ENCODE measurements at regions of chr2 and their contacts with region 1.

Region 1: GRCh38 chr2:28594289-28595108 is 98.6 kb downstream of the PLB1 start:
- DNase-seq: peak; percentile 93 to 96
- H3K4me3 ChIP-seq: no peak overlapping the region
- H3K27ac ChIP-seq: peak overlapping the region; percentile 42 to 70 (median 65)
- H3K4me1 ChIP-seq: peaks cover 14 to 28% of the 10 kb centered on the region in 2 donors
- H3K27me3 ChIP-seq: no peaks in the 10 kb centered on the region
- CTCF ChIP-seq: peak; percentile 66 to 90 (median 80)
- POLR2A ChIP-seq: peak in 1 of 2 donors; percentile 8

Region 2: GRCh38 chr2:28490558-28490957 is 103.9 kb before region 1 on chr2:
- intact Hi-C with region 1: no loop called
- DNase-seq: no peak
- H3K4me3 ChIP-seq: no peak overlapping the region
- H3K27ac ChIP-seq: no peak overlapping the region
- H3K4me1 ChIP-seq: peaks cover 0 to 10% of the 10 kb centered on the region in 2 donors
- H3K27me3 ChIP-seq: no peaks in the 10 kb centered on the region
- CTCF ChIP-seq: no peak
- POLR2A ChIP-seq: no peak

Region 3: GRCh38 chr2:28661589-28662001 is 67.1 kb after region 1 on chr2:
- intact Hi-C with region 1: loop called (anchors 10 kb)
- DNase-seq: peak; percentile 81 to 87
- H3K4me3 ChIP-seq: no peak overlapping the region
- H3K27ac ChIP-seq: peak overlapping the region; percentile 71 to 80 (median 71)
- H3K4me1 ChIP-seq: peaks cover 28 to 48% of the 10 kb centered on the region in 2 donors
- H3K27me3 ChIP-seq: no peaks in the 10 kb centered on the region
- CTCF ChIP-seq: no peak
- POLR2A ChIP-seq: no peak

Region 4: DNA sequence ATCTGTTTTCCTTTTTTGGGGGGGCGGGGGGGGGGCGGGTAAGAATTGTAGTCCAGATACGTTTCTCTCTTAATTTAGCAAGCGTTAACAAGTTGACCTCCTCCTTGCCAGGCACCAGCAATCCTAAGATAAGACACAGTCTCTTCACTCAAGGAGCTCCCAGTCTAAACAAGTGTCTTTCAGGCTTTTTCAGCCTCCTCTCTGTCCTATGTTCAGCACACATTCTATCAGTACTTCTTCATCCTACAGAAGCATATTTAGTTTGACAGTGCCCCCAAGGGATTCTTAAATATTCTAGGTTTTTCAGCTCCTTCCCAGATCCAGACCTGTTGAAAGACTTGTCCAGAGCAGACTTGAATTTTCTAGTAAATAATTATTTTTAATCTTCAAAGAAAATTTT is 159.8 kb after region 1 on chr2:
- intact Hi-C with region 1: loop called (anchors 2 kb)
- DNase-seq: no peak
- H3K4me3 ChIP-seq: no peak overlapping the region
- H3K27ac ChIP-seq: peak overlapping the region; percentile 100
- H3K4me1 ChIP-seq: peaks cover 44 to 58% of the 10 kb centered on the region in 2 donors
- H3K27me3 ChIP-seq: no peaks in the 10 kb centered on the region
- CTCF ChIP-seq: no peak
- POLR2A ChIP-seq: no peak

Measured in thyroid gland (tissue), 4 donors.